Prostate gland (tissue), 2 donors: ENCODE measurements at regions of chr3 and their contacts with region 1.

Region 1: GRCh38 chr3:171459942-171460724 is at the start of gene TNIK:
- DNase-seq: peak; percentile 80
- H3K4me3 ChIP-seq: peak within 1 kb of the TSS; percentile 59 to 61
- H3K27ac ChIP-seq: peak within 1 kb of the TSS; percentile 52 to 66
- H3K4me1 ChIP-seq: no peaks in the 10 kb centered on the region
- H3K27me3 ChIP-seq: peaks cover 5% of the 10 kb centered on the region
- CTCF ChIP-seq: peak in 1 of 4 experiments; percentile 4
- POLR2A ChIP-seq: peak; percentile 39
- total RNA-seq, gene TNIK: 5.6 to 47.1 TPM

Region 2: GRCh38 chr3:171187706-171188290 is 272.3 kb before region 1 on chr3:
- intact Hi-C with region 1: loop called (anchors 5 kb)
- DNase-seq: peak; percentile 7
- H3K4me3 ChIP-seq: no peak overlapping the region
- H3K27ac ChIP-seq: no peak overlapping the region
- H3K4me1 ChIP-seq: no peaks in the 10 kb centered on the region
- H3K27me3 ChIP-seq: no peaks in the 10 kb centered on the region
- CTCF ChIP-seq: peak; percentile 25 to 55 (median 48)
- POLR2A ChIP-seq: no peak

Region 3: GRCh38 chr3:171284308-171285075 is 175.6 kb before region 1 on chr3:
- intact Hi-C with region 1: loop called (anchors 10 kb)
- DNase-seq: no peak
- H3K4me3 ChIP-seq: no peak overlapping the region
- H3K27ac ChIP-seq: no peak overlapping the region
- H3K4me1 ChIP-seq: no peaks in the 10 kb centered on the region
- H3K27me3 ChIP-seq: no peaks in the 10 kb centered on the region
- CTCF ChIP-seq: no peak
- POLR2A ChIP-seq: no peak

Region 4: GRCh38 chr3:171328419-171329082 is 131.6 kb before region 1 on chr3:
- intact Hi-C with region 1: loop called (anchors 10 kb)
- DNase-seq: no peak
- H3K4me3 ChIP-seq: no peak overlapping the region
- H3K27ac ChIP-seq: no peak overlapping the region
- H3K4me1 ChIP-seq: no peaks in the 10 kb centered on the region
- H3K27me3 ChIP-seq: no peaks in the 10 kb centered on the region
- CTCF ChIP-seq: no peak
- POLR2A ChIP-seq: no peak

Region 5: DNA sequence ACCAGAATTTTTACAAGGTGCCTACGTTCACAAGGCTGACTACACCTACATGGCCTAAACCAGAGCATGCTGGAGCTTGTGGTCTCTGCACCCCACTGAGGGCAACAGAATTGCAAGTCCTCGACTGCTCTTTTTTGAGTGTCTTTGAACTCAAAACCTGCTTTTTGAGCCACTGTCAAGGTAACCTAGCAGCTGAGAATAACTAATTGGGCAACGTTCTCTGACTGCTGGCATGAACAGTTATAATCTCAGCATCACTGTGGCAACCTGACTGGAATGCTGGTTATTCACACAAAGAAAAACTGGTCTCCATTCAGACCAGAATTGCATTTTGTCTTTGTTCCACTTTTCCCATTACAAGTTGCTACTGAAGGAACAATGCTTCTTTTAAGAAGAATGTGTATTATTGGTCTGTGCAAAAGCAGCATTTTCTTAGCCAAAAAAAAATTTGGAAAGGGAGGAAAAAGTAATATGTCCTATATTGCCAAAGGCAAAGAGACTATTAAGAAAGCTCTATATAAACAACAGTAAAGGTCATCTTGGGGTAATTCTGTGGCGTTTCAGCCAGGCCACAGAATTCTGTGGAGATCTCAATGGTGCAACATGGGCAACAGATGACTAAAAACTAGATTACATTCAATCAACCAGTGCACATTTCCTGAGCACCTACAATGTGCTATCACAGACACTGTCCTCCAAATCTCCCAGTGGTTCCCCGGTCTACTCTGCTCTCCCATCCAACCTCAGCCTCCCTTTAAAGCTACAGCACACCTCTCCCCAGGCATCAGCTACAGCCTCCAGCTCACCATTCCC is 76.7 kb before region 1 on chr3:
- intact Hi-C with region 1: loop called (anchors 5 kb)
- DNase-seq: no peak
- H3K4me3 ChIP-seq: no peak overlapping the region
- H3K27ac ChIP-seq: no peak overlapping the region
- H3K4me1 ChIP-seq: no peaks in the 10 kb centered on the region
- H3K27me3 ChIP-seq: no peaks in the 10 kb centered on the region
- CTCF ChIP-seq: no peak
- POLR2A ChIP-seq: no peak

Region 6: GRCh38 chr3:171729452-171730334 is 269.6 kb after region 1 on chr3:
- intact Hi-C with region 1: no loop called
- DNase-seq: no peak
- H3K4me3 ChIP-seq: no peak overlapping the region
- H3K27ac ChIP-seq: no peak overlapping the region
- H3K4me1 ChIP-seq: no peaks in the 10 kb centered on the region
- H3K27me3 ChIP-seq: no peaks in the 10 kb centered on the region
- CTCF ChIP-seq: no peak
- POLR2A ChIP-seq: no peak